Vagina (tissue), 2 donors: ENCODE measurements at regions of chr14 and their contacts with region 1.

Region 1: DNA sequence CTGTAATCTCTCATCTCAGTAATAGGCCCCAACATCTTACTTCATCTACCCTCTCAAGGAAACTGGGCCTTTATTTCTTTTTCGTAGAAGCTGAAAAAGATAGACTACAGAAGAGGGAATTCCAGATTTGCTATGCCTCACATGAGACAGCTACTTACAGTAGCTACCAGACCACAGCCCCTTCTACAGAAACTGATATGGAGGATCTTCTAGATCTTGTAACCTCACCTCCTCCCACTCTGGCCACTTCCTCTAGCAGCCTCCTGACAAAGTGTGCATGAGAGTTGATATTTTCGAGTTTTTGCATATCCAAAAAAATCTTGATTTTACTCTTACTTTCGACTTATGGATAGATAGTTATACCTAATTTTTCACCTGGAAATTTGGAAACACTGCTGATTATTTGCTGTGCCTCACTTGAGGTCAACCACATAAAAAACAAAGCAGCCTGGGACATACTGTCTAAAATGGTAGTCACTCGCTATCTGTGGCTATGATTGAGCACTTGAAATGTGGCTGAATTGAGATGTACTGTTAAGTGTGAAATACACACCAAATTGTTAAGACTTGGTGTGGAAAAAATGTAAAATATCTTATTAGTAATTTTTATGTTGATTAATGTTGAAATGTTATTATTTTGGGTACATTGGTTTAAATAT is 86.3 kb upstream of the NID2 start:
- DNase-seq: no peak
- H3K4me3 ChIP-seq: no peak overlapping the region
- H3K27ac ChIP-seq: no peak overlapping the region
- H3K4me1 ChIP-seq: no peaks in the 10 kb centered on the region
- H3K27me3 ChIP-seq: no peaks in the 10 kb centered on the region
- CTCF ChIP-seq: no peak
- POLR2A ChIP-seq: no peak

Region 2: GRCh38 chr14:51202914-51203665 is 952.0 kb before region 1 on chr14:
- intact Hi-C with region 1: no loop called
- DNase-seq: no peak
- H3K4me3 ChIP-seq: no peak overlapping the region
- H3K27ac ChIP-seq: no peak overlapping the region
- H3K4me1 ChIP-seq: no peaks in the 10 kb centered on the region
- H3K27me3 ChIP-seq: no peaks in the 10 kb centered on the region
- CTCF ChIP-seq: no peak
- POLR2A ChIP-seq: no peak

Region 3: GRCh38 chr14:51957950-51958349 is 197.2 kb before region 1 on chr14:
- intact Hi-C with region 1: no loop called
- DNase-seq: no peak
- H3K4me3 ChIP-seq: no peak overlapping the region
- H3K27ac ChIP-seq: no peak overlapping the region
- H3K4me1 ChIP-seq: no peaks in the 10 kb centered on the region
- H3K27me3 ChIP-seq: no peaks in the 10 kb centered on the region
- CTCF ChIP-seq: no peak
- POLR2A ChIP-seq: no peak

Region 4: DNA sequence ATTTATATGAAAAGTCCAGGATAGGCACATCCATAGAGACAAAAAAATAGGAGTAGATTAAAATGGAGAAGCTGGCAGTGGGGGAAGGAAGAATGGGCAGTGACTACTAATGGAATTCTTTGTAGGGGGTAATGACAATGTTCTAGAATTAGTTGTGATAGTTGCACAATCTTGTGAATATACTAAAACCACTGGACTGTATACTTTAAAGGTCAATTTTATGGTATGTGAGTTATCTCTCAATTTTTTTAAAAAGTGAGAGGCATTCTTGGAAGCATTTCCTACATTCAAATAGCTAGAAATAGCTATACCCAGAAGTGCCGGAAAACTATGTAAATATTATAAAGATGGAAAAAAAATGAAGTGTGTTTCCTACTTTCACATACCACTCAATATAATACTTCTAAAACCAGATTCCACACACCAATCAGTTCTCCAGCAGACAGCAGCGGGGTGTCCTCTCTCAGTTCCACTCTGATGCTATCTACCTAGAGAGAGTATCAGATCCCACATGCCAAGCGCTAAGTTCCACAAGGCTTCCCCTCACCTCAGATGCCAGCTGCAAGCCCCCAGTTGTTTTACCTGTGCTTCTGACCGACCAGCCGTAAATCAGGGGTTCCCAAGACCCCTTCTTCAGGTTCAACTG is 44.6 kb before region 1 on chr14:
- intact Hi-C with region 1: no loop called
- DNase-seq: no peak
- H3K4me3 ChIP-seq: no peak overlapping the region
- H3K27ac ChIP-seq: no peak overlapping the region
- H3K4me1 ChIP-seq: no peaks in the 10 kb centered on the region
- H3K27me3 ChIP-seq: no peaks in the 10 kb centered on the region
- CTCF ChIP-seq: no peak
- POLR2A ChIP-seq: no peak

Region 5: DNA sequence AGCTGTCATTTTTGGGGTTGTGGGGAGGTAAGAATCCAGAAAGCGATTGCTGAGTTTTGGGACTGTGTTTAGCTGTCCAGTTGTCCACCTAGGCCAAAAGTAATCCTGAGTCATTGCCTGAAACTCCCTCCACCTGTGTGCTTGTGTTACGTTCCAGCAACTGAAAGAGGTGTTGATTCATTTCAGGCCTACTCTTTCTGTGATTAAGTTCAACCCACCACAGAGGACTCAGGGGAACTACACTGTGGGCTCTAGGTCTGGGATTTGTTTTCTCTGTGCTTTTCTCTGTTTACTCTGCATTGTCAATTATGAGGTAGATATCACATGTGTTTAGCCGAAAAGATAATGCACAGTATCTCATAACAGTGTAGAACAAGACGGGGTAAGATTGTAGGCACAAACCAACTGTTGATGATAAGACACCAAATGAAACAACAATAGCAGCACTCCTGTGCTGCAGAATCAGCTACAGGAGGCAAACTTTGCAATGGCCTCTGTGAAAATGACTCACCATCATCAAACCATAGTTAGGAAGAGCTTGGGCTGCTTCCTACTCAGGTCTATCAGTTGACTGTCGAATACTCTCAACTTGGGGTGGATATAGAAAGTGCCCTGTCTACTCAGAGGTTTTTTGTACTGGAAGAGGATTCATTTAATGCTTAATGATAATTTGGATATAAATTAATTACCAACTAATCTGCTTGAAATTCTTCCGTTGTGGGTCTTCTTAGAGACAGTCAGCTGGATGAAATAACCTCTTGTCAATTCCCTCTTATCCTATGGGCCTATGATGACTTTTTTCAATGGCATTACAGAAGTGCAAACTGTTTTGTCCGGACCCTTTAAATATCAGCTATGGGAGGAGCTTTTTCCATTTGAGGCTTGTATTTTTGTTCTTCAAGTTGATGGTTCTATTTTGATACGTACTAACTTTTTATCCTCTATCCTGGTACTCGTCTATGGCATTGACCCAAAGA is 1415.6 kb after region 1 on chr14:
- intact Hi-C with region 1: loop called (anchors 5 kb)
- DNase-seq: no peak
- H3K4me3 ChIP-seq: no peak overlapping the region
- H3K27ac ChIP-seq: peak overlapping the region; percentile 61
- H3K4me1 ChIP-seq: no peaks in the 10 kb centered on the region
- H3K27me3 ChIP-seq: no peaks in the 10 kb centered on the region
- CTCF ChIP-seq: no peak
- POLR2A ChIP-seq: no peak